PC-3 (cell line): ENCODE measurements at regions of chr2 and their contacts with region 1.

Region 1: GRCh38 chr2:133266041-133266925 is 302.0 kb downstream of the NCKAP5 start:
- DNase-seq: peak; percentile 28
- ATAC-seq: peak; percentile 29
- H3K4me3 ChIP-seq: peak overlapping the region; percentile 76
- H3K27ac ChIP-seq: peak overlapping the region; percentile 38
- H3K4me1 ChIP-seq: peaks cover 47% of the 10 kb centered on the region
- H3K27me3 ChIP-seq: no peaks in the 10 kb centered on the region
- CTCF ChIP-seq: peak; percentile 54; the same call in 1 of the 2 replicates

Region 2: DNA sequence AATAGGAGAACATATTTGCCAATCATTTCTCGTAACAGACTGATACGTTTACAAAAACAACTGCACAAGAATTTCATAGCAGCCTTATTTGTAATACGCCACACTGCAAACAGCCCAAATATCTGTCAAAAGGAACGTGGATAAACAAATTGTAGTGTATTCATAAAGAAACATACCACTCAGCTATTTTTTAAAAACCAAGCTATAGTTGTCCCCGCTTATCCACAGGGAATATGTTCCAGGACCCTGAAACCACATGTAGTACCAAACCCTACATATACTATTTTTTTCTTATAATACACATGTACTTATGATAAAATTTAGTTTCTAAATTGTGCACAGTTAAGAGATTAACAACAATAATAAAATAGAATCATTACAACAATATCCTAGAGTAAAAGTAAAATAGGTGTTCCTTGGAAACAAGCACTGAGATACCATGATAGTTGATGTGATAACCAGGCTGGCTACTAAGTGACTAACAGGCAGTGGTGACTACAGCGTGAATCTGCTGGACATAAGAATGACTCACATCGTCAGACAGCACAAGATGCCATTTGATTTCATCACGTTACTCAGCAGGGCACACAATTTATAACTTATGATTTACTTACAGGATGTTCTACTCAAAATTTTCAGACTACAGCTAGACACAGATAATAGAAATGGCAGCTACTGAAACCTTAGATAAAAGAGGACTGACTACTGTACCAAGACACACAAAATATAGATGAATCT is 65.4 kb before region 1 on chr2:
- CTCF ChIA-PET with region 1: no interaction called
- POLR2A ChIA-PET with region 1: no interaction called
- intact Hi-C with region 1: loop called (anchors 2 kb)
- DNase-seq: peak; percentile 91
- ATAC-seq: peak; percentile 99
- H3K4me3 ChIP-seq: no peak overlapping the region
- H3K27ac ChIP-seq: peak overlapping the region; percentile 77
- H3K4me1 ChIP-seq: peaks cover 35% of the 10 kb centered on the region
- H3K27me3 ChIP-seq: no peaks in the 10 kb centered on the region
- CTCF ChIP-seq: no peak

Region 3: GRCh38 chr2:133434962-133435668 is 168.8 kb after region 1 on chr2:
- CTCF ChIA-PET with region 1: no interaction called
- POLR2A ChIA-PET with region 1: no interaction called
- intact Hi-C with region 1: loop called (anchors 10 kb)
- DNase-seq: peak; percentile 65
- ATAC-seq: no peak
- H3K4me3 ChIP-seq: no peak overlapping the region
- H3K27ac ChIP-seq: no peak overlapping the region
- H3K4me1 ChIP-seq: peaks cover 16% of the 10 kb centered on the region
- H3K27me3 ChIP-seq: no peaks in the 10 kb centered on the region
- CTCF ChIP-seq: peak; percentile 24; the same call in 1 of the 2 replicates

Region 4: GRCh38 chr2:133780099-133780839 is 514.0 kb after region 1 on chr2:
- CTCF ChIA-PET with region 1: interaction called, 15 read pairs
- POLR2A ChIA-PET with region 1: no interaction called
- intact Hi-C with region 1: loop called (anchors 1 kb)
- DNase-seq: peak; percentile 94
- ATAC-seq: peak; percentile 20; the same call in 1 of the 2 replicates
- H3K4me3 ChIP-seq: no peak overlapping the region
- H3K27ac ChIP-seq: no peak overlapping the region
- H3K4me1 ChIP-seq: peaks cover 23% of the 10 kb centered on the region
- H3K27me3 ChIP-seq: no peaks in the 10 kb centered on the region
- CTCF ChIP-seq: peak; percentile 95